ENCODE measurements at regions of chr6 and their contacts with region 1.

Region 1: DNA sequence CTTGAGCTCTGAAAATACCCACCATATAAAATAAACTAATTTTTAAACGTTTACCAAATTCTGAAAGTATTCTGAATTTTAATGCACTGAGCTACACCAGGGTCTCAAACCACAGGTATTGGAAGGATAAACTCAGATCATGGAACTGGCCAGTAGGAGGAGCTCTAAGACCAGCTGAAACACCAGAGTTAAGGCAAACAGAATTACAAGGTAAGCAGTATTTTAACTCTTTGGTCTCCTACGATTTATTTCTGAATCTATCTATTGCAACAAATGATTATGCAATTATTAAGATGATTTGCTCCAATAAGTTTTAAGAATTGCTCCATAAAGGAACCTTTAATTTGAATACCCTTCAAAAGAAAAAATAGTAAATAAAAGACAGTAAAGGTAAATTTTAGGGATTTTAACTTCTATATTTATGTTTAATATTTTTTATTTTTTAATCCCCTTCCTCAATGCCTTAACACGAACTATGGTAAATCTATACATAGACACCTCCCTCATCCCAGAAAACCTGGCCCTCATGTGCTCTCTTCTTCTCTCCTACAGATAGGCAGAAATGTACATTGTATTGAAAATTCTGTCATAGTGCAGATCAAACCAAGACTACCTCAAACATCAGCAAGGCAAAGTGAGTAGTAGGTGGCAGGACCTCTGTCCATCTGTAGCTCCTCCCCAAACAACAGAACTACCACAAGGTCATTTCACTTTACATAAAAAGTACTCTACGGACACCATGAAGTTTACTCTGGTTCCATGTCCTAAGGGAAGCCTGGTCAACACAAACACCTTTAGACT is 58.4 kb downstream of the SMLR1 start:
- DNase-seq: peak; percentile 60 to 90 (median 78)
- H3K4me3 ChIP-seq: no peak overlapping the region
- H3K27ac ChIP-seq: no peak overlapping the region
- H3K4me1 ChIP-seq: peaks cover 0 to under 1% of the 10 kb centered on the region in 2 donors
- H3K27me3 ChIP-seq: no peaks in the 10 kb centered on the region
- CTCF ChIP-seq: peak; percentile 82 to 98 (median 94)
- POLR2A ChIP-seq: no peak

Region 2: GRCh38 chr6:130482645-130483390 is 402.8 kb before region 1 on chr6:
- intact Hi-C with region 1: no loop called
- DNase-seq: no peak
- H3K4me3 ChIP-seq: no peak overlapping the region
- H3K27ac ChIP-seq: peak overlapping the region in 2 of 5 donors; percentile 14 to 41
- H3K4me1 ChIP-seq: peaks cover 0 to 11% of the 10 kb centered on the region in 2 donors
- H3K27me3 ChIP-seq: no peaks in the 10 kb centered on the region
- CTCF ChIP-seq: no peak
- POLR2A ChIP-seq: no peak

Region 3: GRCh38 chr6:130708338-130708737 is 177.3 kb before region 1 on chr6:
- intact Hi-C with region 1: no loop called
- DNase-seq: no peak
- H3K4me3 ChIP-seq: no peak overlapping the region
- H3K27ac ChIP-seq: no peak overlapping the region
- H3K4me1 ChIP-seq: no peaks in the 10 kb centered on the region
- H3K27me3 ChIP-seq: no peaks in the 10 kb centered on the region
- CTCF ChIP-seq: no peak
- POLR2A ChIP-seq: no peak

Region 4: GRCh38 chr6:130796313-130796905 is 89.2 kb before region 1 on chr6:
- intact Hi-C with region 1: no loop called
- DNase-seq: peak in 2 of 7 donors; percentile 18 to 31
- H3K4me3 ChIP-seq: no peak overlapping the region
- H3K27ac ChIP-seq: no peak overlapping the region
- H3K4me1 ChIP-seq: no peaks in the 10 kb centered on the region
- H3K27me3 ChIP-seq: no peaks in the 10 kb centered on the region
- CTCF ChIP-seq: no peak
- POLR2A ChIP-seq: no peak

Region 5: DNA sequence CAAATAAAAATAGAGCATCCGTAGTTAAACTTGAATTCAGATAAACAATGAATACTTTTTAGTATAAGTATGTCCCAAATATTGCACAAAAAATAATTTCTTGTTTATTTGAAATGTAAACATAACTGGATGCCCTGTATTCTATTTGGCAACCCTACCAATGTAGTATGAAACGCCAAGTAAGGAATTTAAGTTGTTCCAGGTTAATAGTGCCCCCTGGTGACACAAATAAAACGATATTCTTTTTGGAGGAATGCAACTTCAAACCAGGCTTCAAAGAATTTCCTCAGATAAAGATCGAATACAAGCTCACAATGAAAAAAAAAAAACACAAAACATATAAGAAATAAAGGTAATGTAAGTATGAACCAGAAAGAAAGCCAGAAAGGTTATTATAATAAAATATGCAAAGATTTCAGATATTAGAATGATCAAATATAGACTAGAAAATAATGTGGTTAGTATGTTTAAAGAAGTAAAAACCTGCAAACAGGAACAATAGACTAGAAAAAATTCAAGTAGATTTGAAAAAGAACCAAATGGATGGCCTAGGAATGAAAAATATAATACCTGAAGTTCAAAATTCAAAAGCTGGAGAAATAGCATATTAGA is 231.3 kb after region 1 on chr6:
- intact Hi-C with region 1: loop called (anchors 5 kb)
- DNase-seq: no peak
- H3K4me3 ChIP-seq: no peak overlapping the region
- H3K27ac ChIP-seq: no peak overlapping the region
- H3K4me1 ChIP-seq: no peaks in the 10 kb centered on the region
- H3K27me3 ChIP-seq: no peaks in the 10 kb centered on the region
- CTCF ChIP-seq: peak; percentile 41 to 78 (median 64)
- POLR2A ChIP-seq: no peak

Region 6: DNA sequence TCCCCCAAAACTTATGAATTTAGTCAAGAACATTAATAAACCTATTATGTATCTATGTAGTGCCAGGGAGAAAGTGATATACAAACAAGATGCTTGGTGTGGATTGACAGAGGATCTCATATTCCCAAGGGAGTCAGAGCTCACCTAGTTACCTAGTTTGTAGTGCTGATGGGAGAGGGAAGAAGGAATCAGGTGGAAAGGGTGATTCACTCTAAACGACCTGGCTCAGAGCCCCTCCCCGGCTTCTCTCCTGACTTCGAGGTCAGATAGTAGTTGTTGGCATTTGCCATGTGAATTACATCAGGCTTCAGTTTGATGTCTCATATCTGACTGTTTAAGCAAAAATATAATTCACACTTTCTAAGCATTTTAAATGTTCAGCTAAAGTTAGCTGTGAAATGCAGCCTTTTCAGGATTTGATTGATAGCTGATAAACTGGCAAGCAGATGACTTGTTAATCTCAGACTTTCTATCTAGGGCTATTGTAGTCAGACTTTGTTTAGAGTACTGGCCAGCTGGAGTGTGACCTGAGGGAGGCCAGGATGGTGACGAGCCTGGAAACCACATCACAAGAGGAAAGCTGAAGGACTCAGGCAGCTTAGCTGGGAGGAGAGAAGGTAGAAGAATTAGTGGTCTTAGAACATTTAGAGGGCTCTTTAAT is 373.4 kb after region 1 on chr6:
- intact Hi-C with region 1: no loop called
- DNase-seq: peak; percentile 70 to 86 (median 76)
- H3K4me3 ChIP-seq: no peak overlapping the region
- H3K27ac ChIP-seq: peak overlapping the region in 4 of 5 donors; percentile 35 to 76 (median 68)
- H3K4me1 ChIP-seq: peaks cover 18 to 40% of the 10 kb centered on the region in 2 donors
- H3K27me3 ChIP-seq: no peaks in the 10 kb centered on the region
- CTCF ChIP-seq: no peak
- POLR2A ChIP-seq: no peak

Measured in adrenal gland (tissue), 19 donors.